Left ventricle myocardium inferior (tissue), 1 donor: ENCODE measurements at regions of chr9 and their contacts with region 1.

Region 1: GRCh38 chr9:124320062-124320973 is 62.6 kb downstream of the NEK6 start:
- DNase-seq: peak; percentile 63
- H3K4me3 ChIP-seq: no peak overlapping the region
- H3K27ac ChIP-seq: no peak overlapping the region
- H3K4me1 ChIP-seq: peaks cover 8% of the 10 kb centered on the region
- H3K27me3 ChIP-seq: no peaks in the 10 kb centered on the region
- CTCF ChIP-seq: peak; percentile 90

Region 2: DNA sequence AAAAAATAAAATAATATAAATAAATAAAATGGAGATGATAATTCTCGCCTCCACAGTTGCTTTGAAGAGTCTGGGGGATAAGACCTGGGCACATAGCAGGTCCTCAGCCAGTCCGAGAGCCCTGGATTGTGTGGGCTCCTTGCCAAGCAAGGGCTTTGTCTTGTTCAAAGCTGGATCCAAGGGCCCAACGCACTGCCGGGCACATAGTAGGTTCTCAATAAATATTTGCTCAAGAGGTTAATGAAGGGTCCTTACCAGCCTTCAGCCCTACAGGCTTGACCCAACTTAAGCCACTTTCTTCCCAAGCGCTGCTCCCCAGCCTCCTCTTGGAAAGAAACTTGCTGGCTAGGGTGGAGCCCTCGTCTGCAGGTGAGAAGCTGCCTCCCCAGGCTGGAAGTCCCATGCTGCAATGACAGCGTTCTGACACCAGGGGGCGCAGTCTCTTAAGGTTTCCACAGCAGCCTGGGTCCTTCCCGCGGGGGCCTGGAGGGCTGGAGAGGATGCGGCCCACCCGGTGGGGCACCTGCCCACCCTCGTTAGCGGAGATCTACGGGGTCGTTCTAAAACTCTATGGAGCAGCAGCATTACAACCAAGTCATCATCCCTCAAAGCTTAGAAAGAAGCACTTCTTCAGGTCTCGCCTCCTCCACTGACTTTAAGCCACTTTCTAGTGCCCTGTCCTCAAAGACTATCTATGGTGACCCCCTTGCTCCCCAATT is 193.6 kb before region 1 on chr9:
- intact Hi-C with region 1: loop called (anchors 2 kb)
- DNase-seq: peak; percentile 70
- H3K4me3 ChIP-seq: no peak overlapping the region
- H3K27ac ChIP-seq: no peak overlapping the region
- H3K4me1 ChIP-seq: no peaks in the 10 kb centered on the region
- H3K27me3 ChIP-seq: peaks cover 50% of the 10 kb centered on the region
- CTCF ChIP-seq: peak; percentile 99

Region 3: GRCh38 chr9:124239249-124240073 is 80.9 kb before region 1 on chr9:
- intact Hi-C with region 1: no loop called
- DNase-seq: no peak
- H3K4me3 ChIP-seq: no peak overlapping the region
- H3K27ac ChIP-seq: no peak overlapping the region
- H3K4me1 ChIP-seq: peaks cover 12% of the 10 kb centered on the region
- H3K27me3 ChIP-seq: peaks cover 7% of the 10 kb centered on the region
- CTCF ChIP-seq: no peak

Region 4: DNA sequence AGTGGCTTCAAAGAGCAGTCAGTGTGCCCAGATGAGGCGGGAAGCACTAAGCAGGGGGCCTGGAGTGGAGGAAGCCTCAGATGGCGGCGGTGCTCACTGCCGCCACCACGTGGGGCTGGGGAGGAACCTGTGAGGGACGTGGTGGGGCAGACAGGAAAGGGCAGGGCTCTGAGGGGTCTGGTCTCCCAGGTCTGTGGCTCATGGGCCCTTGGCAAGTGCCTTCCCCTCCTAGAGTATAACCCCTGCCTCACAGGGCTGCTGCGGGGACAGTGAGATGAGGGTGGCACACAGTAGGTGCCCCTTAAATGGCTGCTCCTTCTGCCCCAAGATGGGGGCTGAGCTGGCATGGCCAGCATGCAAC is 160.3 kb after region 1 on chr9:
- intact Hi-C with region 1: no loop called
- DNase-seq: no peak
- H3K4me3 ChIP-seq: no peak overlapping the region
- H3K27ac ChIP-seq: no peak overlapping the region
- H3K4me1 ChIP-seq: peaks cover 11% of the 10 kb centered on the region
- H3K27me3 ChIP-seq: peaks cover 100% of the 10 kb centered on the region
- CTCF ChIP-seq: peak; percentile 53